GM18951 (cell line): ENCODE measurements at regions of chr14 and their contacts with region 1.

Region 1: GRCh38 chr14:96445844-96446710 is 54.1 kb downstream of the AK7 start:
- POLR2A ChIP-seq: no peak

Region 2: GRCh38 chr14:96100161-96101029 is 345.7 kb before region 1 on chr14:
- in situ Hi-C with region 1: loop called (anchors 25 kb)
- POLR2A ChIP-seq: no peak

Region 3: GRCh38 chr14:96275177-96276112 is 170.6 kb before region 1 on chr14:
- in situ Hi-C with region 1: no loop called
- POLR2A ChIP-seq: no peak

Region 4: GRCh38 chr14:96554315-96554910 is 108.3 kb after region 1 on chr14:
- in situ Hi-C with region 1: no loop called
- POLR2A ChIP-seq: no peak

Region 5: GRCh38 chr14:97113339-97113738 is 667.3 kb after region 1 on chr14:
- in situ Hi-C with region 1: no loop called
- POLR2A ChIP-seq: no peak